ENCODE measurements at regions of chr7 and their contacts with region 1.

Region 1: GRCh38 chr7:151782598-151783448 is 94.1 kb downstream of the PRKAG2 start:
- DNase-seq: peak; percentile 88
- ATAC-seq: peak; percentile 84

Region 2: GRCh38 chr7:151867912-151868311 is 85.1 kb after region 1 on chr7:
- intact Hi-C with region 1: loop called (anchors 5 kb)
- DNase-seq: no peak
- ATAC-seq: peak; percentile 69

Measured in Right ventricle myocardium inferior (tissue), 1 donor.